ENCODE measurements at regions of chr19 and their contacts with region 1.

Region 1: GRCh38 chr19:383922-384798 is 24.8 kb downstream of the C2CD4C start:
- DNase-seq: no peak
- ATAC-seq: peak; percentile 49 to 80 (median 74)
- H3K4me3 ChIP-seq: no peak overlapping the region
- H3K27ac ChIP-seq: no peak overlapping the region
- H3K4me1 ChIP-seq: no peaks in the 10 kb centered on the region
- H3K27me3 ChIP-seq: peaks cover 0 to 32% (median 0%) of the 10 kb centered on the region in 3 donors
- CTCF ChIP-seq: peak; percentile 53

Region 2: DNA sequence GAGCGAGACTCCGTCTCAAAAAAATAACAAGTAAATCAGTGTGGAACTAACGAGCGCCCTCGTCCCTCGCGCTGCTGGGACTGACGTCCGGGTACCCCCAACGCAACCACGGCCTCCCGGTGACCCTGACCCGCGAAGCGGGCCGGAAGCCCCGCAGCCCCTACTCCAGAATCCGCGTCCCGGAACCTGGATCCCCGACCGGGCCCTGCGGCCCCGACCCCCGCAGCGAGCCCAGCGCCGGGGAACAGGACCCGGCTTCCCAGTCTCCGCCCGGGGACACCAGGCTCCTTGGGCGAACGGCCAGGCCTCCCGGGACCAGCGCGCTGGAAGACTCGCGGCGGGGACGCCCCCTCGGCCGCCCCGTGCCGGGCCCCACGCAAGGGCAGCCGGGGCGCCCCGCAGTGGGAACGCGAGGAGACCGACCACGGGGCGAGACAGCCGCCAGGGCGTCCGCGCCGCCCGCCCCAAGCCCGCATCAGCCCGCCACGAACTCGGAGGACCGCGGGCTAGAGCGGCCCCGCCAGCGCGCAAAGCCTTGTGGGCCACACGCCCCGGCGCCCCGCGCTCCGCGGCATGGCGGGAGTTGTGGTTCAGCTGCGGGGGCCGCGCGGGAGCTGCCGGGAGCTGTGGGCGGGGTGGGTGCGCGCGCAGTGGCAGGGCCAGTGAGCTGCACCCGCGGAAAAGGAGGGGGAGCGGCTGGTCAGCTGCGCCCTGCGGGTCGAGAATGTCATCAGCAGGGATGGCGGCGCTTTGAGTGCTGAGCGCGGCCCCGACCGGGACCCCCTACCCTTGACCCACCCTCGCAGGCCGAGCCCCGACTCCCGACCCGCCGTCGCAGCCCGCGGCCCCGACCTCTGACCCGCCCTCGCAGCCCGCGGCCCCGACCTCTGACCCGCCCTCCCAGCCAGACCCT is 104.6 kb after region 1 on chr19:
- intact Hi-C with region 1: loop called in 1 of 2 experiments (anchors 10 kb)
- DNase-seq: peak; percentile 98 to 99
- ATAC-seq: peak; percentile 95 to 98 (median 97)
- H3K4me3 ChIP-seq: peak overlapping the region; percentile 92
- H3K27ac ChIP-seq: peak overlapping the region; percentile 93
- H3K4me1 ChIP-seq: peaks cover 11% of the 10 kb centered on the region
- H3K27me3 ChIP-seq: peaks cover 0 to 19% (median 2%) of the 10 kb centered on the region in 3 donors
- CTCF ChIP-seq: no peak

Region 3: GRCh38 chr19:623974-624373 is 239.8 kb after region 1 on chr19:
- intact Hi-C with region 1: no loop called
- DNase-seq: no peak
- ATAC-seq: peak in 2 of 4 donors; percentile 32 to 34
- H3K4me3 ChIP-seq: no peak overlapping the region
- H3K27ac ChIP-seq: peak overlapping the region; percentile 16
- H3K4me1 ChIP-seq: no peaks in the 10 kb centered on the region
- H3K27me3 ChIP-seq: no peaks in the 10 kb centered on the region
- CTCF ChIP-seq: no peak